ENCODE measurements at regions of chr9 and their contacts with region 1.

Region 1: GRCh38 chr9:17462869-17463464 is 115.9 kb upstream of the SH3GL2 start:
- DNase-seq: peak; percentile 9
- H3K4me3 Mint-ChIP-seq: no peak overlapping the region
- H3K27ac Mint-ChIP-seq: no peak overlapping the region
- H3K4me1 Mint-ChIP-seq: no peaks in the 10 kb centered on the region
- H3K27me3 Mint-ChIP-seq: no peaks in the 10 kb centered on the region

Region 2: DNA sequence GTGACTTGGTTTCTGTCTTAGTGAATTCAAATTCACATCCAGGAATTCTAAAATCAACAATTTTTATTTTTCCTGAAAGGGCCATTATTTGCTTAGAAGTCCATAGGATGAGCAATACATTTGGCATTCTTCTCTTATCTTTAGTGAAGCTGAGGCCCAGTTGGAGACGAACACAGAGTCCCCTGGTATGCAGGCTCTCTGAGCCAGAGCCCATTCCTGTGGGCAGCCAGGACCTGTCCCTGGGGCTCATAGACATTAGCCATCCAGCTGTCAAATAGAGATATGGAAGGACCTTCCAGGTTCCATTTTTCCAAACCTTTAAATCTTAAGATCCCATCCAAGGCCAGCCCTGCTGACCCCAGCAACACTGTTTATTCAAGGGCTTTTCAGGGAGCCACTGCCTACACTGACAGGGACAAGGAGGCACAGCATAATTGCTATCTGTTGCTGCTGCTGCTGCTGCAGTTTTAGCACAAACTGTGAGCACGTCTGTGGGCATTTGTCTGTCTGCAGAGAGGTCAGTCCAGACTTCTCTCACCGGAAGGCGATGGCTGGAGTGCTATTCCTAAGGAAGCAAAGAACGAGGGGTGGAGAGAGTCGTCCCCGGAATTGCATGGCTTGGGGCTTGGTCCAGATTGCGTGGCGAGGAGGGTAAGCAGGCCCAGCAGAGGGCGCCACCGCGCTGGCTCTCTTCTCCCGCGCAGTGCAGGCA is 1271.1 kb before region 1 on chr9:
- CTCF ChIA-PET with region 1: no interaction called
- POLR2A ChIA-PET with region 1: no interaction called
- intact Hi-C with region 1: loop called (anchors 5 kb)
- DNase-seq: peak; percentile 40
- H3K4me3 Mint-ChIP-seq: no peak overlapping the region
- H3K27ac Mint-ChIP-seq: no peak overlapping the region
- H3K4me1 Mint-ChIP-seq: no peaks in the 10 kb centered on the region
- H3K27me3 Mint-ChIP-seq: no peaks in the 10 kb centered on the region

Region 3: DNA sequence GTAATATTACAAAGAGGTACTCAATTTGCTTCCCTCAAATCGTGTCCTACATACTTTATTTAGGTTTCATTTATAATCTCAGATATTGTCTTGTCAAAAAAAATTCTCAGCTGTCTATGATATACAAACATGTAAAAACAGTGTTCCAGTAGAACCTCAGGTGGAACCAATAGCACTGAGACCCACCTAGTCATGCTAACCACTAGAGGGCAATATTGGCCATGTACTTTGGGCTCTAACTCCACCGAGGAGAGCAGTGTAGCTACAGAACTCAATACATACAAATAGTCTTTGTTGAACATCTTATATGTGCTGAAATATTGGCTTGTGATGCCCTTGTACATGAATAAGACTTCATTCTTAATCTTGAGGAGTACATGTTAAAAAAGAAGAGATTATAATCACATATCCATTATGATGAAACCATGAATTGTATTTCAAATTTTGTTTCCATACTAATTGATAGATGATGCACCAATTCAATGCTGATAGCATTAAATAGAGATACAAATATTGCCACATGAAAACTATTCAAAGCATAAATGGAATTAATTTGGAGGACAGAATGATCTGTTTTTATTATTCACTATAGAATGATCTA is 399.3 kb before region 1 on chr9:
- CTCF ChIA-PET with region 1: interaction called, 7 read pairs
- POLR2A ChIA-PET with region 1: no interaction called
- intact Hi-C with region 1: loop called (anchors 2 kb)
- DNase-seq: no peak
- H3K4me3 Mint-ChIP-seq: no peak overlapping the region
- H3K27ac Mint-ChIP-seq: no peak overlapping the region
- H3K4me1 Mint-ChIP-seq: no peaks in the 10 kb centered on the region
- H3K27me3 Mint-ChIP-seq: no peaks in the 10 kb centered on the region

Region 4: GRCh38 chr9:17116400-17116837 is 346.5 kb before region 1 on chr9:
- CTCF ChIA-PET with region 1: interaction called, 16 read pairs
- POLR2A ChIA-PET with region 1: no interaction called
- intact Hi-C with region 1: loop called (anchors 1 kb)
- DNase-seq: no peak
- H3K4me3 Mint-ChIP-seq: no peak overlapping the region
- H3K27ac Mint-ChIP-seq: no peak overlapping the region
- H3K4me1 Mint-ChIP-seq: no peaks in the 10 kb centered on the region
- H3K27me3 Mint-ChIP-seq: no peaks in the 10 kb centered on the region

Region 5: DNA sequence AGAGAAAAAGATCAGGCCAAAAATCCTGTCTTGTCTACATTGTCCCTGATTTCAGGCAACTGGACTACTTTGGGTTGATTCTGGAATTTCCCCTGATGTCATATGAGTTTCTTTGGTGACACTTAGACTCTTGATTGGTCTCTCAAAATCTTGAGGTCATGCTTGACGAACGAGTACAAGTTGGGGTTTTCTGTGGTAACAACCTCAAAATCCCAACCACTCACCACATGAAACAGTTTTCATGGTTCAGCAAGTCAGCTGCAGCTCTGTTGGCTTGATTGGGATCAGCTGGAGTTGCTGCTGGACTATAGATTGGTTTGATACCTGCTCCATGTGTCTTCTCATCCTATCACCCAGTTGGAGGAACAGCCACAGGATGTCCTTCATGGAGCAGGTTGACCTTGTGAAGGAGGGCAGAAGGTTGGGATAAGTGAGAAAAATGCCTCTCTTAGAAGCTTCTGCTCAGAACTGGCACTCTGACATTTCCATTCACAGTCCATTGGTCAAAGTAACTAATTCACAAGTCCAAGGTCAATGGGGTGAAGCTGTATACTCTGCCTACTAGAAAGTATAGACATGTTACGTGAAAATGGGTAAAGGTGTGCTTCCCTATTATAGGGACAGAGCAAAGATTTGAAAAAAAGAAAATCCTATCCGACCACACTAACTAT is 400.4 kb after region 1 on chr9:
- CTCF ChIA-PET with region 1: no interaction called
- POLR2A ChIA-PET with region 1: no interaction called
- intact Hi-C with region 1: no loop called
- DNase-seq: no peak
- H3K4me3 Mint-ChIP-seq: no peak overlapping the region
- H3K27ac Mint-ChIP-seq: no peak overlapping the region
- H3K4me1 Mint-ChIP-seq: no peaks in the 10 kb centered on the region
- H3K27me3 Mint-ChIP-seq: no peaks in the 10 kb centered on the region

Measured in activated CD4-positive, alpha-beta memory T cell treated with anti-CD3 and anti-CD28 coated beads for 36 hours (primary cell).